Transverse colon (tissue), 4 donors: ENCODE measurements at regions of chr13 and their contacts with region 1.

Region 1: DNA sequence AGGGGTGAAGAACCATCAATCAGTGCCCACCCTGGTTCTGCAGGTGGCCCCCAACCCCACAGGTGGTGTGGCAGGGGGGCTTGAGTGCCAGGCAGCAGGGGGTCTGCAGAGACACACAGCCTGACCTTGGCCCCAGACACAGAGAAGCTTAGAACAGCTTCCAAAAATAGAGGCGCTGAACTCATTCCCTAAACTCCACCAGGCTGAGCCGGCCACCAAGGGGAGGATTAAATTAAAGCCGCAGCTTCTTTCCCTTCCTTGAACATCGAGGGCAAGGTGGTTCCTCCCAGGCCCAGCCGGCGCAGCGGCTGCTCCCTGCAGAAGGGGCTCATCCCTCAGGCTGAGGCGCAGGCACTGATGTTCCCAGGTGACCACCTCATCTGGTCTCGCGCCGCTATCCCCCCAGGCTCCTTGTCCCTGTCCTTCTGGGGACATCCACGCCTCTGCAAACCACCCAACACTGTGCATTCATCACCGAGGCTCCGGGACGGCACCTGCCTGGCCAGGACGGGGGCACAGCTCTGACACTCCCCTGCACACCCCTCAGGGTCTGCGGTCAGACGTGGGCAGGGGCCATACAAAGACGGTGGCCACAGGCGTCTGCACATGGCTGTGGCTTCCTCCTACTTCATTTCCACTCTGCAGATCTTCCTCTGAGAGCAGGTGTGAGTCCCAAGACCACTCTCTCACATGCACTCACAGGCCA is 30.9 kb downstream of the LAMP1 start:
- DNase-seq: no peak
- H3K4me3 ChIP-seq: no peak overlapping the region
- H3K27ac ChIP-seq: no peak overlapping the region
- H3K4me1 ChIP-seq: no peaks in the 10 kb centered on the region
- H3K27me3 ChIP-seq: no peaks in the 10 kb centered on the region
- CTCF ChIP-seq: no peak
- EP300 ChIP-seq: no peak
- POLR2A ChIP-seq: peak; percentile 6

Region 2: DNA sequence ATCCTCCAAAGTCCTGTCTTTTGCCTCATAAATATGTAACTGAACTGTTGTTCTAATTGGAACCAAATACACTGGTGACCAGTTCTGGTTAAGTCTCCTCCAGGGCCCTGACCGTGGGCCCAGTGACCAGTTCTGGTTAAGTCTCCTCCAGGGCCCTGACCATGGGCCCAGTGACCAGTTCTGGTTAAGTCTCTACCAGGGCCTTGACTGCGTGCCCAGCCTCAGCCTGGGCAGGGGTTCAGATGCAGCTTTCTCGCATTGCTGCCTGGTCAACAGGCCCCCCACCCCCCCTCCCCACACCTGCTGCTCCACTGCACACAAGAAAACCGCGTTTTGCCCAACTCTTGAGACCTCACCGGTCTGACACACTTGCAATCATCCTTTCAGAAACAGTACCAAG is 39.9 kb after region 1 on chr13:
- in situ Hi-C with region 1: no loop called
- intact Hi-C with region 1: loop called (anchors 1 kb)
- DNase-seq: no peak
- H3K4me3 ChIP-seq: no peak overlapping the region
- H3K27ac ChIP-seq: no peak overlapping the region
- H3K4me1 ChIP-seq: peaks cover 0 to 17% (median 12%) of the 10 kb centered on the region in 4 donors
- H3K27me3 ChIP-seq: peaks cover 10% of the 10 kb centered on the region
- CTCF ChIP-seq: no peak
- EP300 ChIP-seq: no peak
- POLR2A ChIP-seq: no peak